GM23248 (cell line): ENCODE measurements at regions of chr1 and their contacts with region 1.

Region 1: GRCh38 chr1:54488779-54489626 is 59.0 kb upstream of the ACOT11 start:
- DNase-seq: peak; percentile 86
- H3K4me3 ChIP-seq: peak overlapping the region; percentile 82
- H3K27ac ChIP-seq: peak overlapping the region; percentile 78
- H3K4me1 ChIP-seq: peaks cover 10% of the 10 kb centered on the region
- H3K27me3 ChIP-seq: no peaks in the 10 kb centered on the region

Region 2: DNA sequence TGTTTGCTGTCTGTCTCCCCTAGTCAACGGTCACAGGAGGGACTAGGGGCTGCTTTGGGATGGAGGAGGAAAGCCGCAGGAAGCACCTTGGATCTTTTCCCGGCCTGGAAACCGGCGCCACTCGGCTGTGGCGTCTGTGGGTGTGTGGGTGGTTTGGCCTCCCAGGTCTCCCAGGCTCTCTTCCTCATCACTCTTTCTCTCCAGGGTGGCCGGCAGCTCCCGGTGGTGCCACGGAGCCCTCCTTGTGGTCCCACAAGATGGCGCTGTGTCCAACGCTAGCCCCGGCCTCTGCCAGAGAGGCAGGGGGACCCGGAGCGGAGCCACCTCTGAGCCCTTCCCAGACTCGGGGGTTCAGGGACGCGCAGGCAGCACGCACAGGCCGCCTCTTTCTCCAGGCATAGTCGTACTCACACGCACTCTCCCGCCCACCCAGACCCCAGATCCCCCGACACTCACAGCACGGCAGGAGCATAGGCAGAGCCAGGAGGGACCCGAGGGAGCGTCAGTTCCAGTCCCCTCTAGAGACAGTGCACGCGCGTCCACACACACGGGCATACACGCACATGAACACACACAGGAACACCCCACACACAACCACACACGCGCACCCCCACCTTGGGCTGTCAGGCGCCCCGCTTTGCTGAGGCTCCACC is 367.4 kb before region 1 on chr1:
- in situ Hi-C with region 1: loop called (anchors 25 kb)
- DNase-seq: peak; percentile 90
- H3K4me3 ChIP-seq: peak overlapping the region; percentile 59
- H3K27ac ChIP-seq: peak overlapping the region; percentile 74
- H3K4me1 ChIP-seq: peaks cover 21% of the 10 kb centered on the region
- H3K27me3 ChIP-seq: no peaks in the 10 kb centered on the region

Region 3: GRCh38 chr1:54413295-54413694 is 75.7 kb before region 1 on chr1:
- in situ Hi-C with region 1: loop called (anchors 5 kb)
- DNase-seq: peak; percentile 80
- H3K4me3 ChIP-seq: no peak overlapping the region
- H3K27ac ChIP-seq: no peak overlapping the region
- H3K4me1 ChIP-seq: peaks cover 17% of the 10 kb centered on the region
- H3K27me3 ChIP-seq: no peaks in the 10 kb centered on the region